HepG2 (cell line): ENCODE measurements at regions of chr5 and their contacts with region 1.

Region 1: DNA sequence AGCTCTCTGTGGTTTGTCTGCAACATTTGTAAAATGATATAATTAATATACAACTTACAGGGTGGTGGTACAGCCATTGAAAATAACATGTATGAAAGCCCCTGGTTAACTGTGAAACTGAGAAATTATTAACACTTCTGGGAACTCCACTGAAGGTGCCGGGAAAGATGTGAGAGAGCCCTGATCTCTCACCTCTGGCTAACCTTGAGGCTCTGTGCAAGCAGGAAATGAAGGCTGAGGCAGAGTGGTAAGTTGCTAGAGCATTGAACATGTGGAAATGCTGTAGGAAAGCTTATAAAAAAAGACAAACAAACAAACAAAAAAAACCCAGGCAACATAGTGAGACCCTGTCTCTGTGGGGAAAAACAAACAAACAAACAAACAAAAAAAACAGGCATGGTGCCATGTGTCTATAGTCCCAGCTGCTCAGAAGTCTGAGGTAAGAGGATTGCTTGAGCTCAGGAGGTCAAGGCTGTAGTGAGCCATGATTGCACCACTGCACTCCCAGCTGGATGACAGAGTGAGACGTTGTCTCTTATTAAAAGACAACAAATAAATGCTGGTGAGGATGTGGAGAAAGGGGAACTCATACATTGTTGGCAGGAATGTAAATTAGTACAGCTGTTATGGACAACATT is 7.5 kb downstream of the CATSPER3 start:
- DNase-seq: peak; percentile 71
- ATAC-seq: peak; percentile 85
- H3K4me3 ChIP-seq: no peak overlapping the region
- H3K27ac ChIP-seq: peak overlapping the region; percentile 45
- H3K4me1 ChIP-seq: peaks cover 15% of the 10 kb centered on the region
- H3K27me3 ChIP-seq: no peaks in the 10 kb centered on the region
- CTCF ChIP-seq: no peak
- EP300 ChIP-seq: peak; percentile 31 to 69; a peak in 2 of 4 replicates
- POLR2A ChIP-seq: no peak
- RAD21 ChIP-seq: no peak

Region 2: DNA sequence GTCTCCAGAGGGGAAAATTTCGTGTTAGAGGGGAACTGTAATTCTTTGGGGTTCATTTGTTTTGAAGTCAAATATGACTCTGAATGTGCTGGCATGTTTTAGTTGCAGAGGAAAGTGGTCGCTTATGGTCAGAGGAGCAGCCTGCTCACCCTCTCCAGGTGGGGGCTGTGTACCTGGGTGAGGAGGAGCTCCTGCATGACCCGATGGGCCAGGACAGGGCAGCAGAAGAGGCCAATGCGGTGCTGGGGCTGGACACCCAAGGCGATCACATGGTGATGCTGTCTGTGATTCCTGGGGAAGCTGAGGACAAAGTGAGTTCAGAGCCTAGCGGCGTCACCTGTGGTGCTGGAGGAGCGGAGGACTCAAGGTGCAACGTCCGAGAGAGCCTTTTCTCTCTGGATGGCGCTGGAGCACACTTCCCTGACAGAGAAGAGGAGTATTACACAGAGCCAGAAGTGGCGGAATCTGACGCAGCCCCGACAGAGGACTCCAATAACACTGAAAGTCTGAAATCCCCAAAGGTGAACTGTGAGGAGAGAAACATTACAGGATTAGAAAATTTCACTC is 87.5 kb before region 1 on chr5:
- CTCF ChIA-PET with region 1: no interaction called
- POLR2A ChIA-PET with region 1: no interaction called
- in situ Hi-C with region 1: no loop called
- intact Hi-C with region 1: no loop called
- DNase-seq: no peak
- ATAC-seq: no peak; the same call in 2 of the 3 replicates
- H3K4me3 ChIP-seq: no peak overlapping the region
- H3K27ac ChIP-seq: no peak overlapping the region
- H3K4me1 ChIP-seq: peaks cover 7% of the 10 kb centered on the region; the same call in 1 of the 2 replicates
- H3K27me3 ChIP-seq: no peaks in the 10 kb centered on the region
- CTCF ChIP-seq: no peak
- EP300 ChIP-seq: no peak
- POLR2A ChIP-seq: no peak
- RAD21 ChIP-seq: no peak

Region 3: DNA sequence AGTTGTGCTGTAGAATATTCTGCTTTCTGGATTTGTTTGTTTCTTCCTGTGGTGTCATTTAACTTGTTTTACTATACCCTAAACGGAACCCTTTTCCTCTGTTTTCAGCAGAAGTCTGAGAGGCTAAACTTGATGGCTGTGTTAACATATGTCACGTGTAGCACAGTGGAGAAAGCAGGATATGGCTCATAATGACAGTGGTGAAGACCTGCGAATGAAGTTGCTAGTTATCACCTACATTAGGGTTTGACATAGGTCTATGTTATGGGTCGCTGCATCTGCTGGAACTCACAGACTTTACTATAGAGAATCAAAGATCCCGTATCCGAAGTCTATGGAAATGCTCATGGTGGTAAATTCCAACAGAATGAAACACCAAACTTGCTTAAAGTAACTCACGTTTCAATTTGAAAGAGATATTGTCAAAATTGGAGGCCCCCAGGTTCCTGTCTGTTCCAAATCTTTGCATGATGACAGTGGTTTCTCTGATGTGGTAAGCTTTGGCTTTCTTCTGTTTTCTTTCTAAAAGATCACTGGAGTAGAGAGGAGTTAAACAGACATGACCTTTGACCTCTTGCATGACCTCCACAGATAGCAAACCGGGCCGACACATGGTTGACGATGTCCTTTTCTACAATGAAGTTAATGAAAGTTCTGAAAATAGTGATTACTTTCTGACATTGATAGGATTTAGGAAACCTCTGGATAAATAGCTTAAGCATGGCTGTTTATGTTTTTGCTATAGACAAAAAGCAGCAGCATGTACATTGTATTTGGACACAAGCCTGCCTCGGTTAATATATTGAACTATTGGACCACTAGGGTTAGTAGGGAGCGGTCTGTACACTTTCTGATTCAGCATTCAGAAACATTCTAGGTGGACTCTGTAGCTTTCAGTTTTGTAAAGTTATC is 10.6 kb before region 1 on chr5:
- CTCF ChIA-PET with region 1: no interaction called
- POLR2A ChIA-PET with region 1: interaction called, 22 read pairs
- in situ Hi-C with region 1: no loop called
- intact Hi-C with region 1: no loop called
- DNase-seq: peak; percentile 92
- ATAC-seq: peak; percentile 83
- H3K4me3 ChIP-seq: peak overlapping the region in 2 of 3 experiments; percentile 10 to 35; a peak in 3 of 6 replicates
- H3K27ac ChIP-seq: peak overlapping the region; percentile 65
- H3K4me1 ChIP-seq: peaks cover 35% of the 10 kb centered on the region
- H3K27me3 ChIP-seq: no peaks in the 10 kb centered on the region
- CTCF ChIP-seq: no peak
- EP300 ChIP-seq: peak in 1 of 2 experiments; percentile 91; a peak in 2 of 4 replicates
- POLR2A ChIP-seq: no peak
- RAD21 ChIP-seq: no peak